AG04450 (cell line): ENCODE measurements at regions of chr4 and their contacts with region 1.

Region 1: GRCh38 chr4:16205298-16206164 is 20.7 kb downstream of the TAPT1 start:
- DNase-seq: no peak
- H3K4me3 ChIP-seq: no peak overlapping the region
- H3K27ac ChIP-seq: no peak overlapping the region
- H3K27me3 ChIP-seq: no peaks in the 10 kb centered on the region
- CTCF ChIP-seq: peak; percentile 59

Region 2: DNA sequence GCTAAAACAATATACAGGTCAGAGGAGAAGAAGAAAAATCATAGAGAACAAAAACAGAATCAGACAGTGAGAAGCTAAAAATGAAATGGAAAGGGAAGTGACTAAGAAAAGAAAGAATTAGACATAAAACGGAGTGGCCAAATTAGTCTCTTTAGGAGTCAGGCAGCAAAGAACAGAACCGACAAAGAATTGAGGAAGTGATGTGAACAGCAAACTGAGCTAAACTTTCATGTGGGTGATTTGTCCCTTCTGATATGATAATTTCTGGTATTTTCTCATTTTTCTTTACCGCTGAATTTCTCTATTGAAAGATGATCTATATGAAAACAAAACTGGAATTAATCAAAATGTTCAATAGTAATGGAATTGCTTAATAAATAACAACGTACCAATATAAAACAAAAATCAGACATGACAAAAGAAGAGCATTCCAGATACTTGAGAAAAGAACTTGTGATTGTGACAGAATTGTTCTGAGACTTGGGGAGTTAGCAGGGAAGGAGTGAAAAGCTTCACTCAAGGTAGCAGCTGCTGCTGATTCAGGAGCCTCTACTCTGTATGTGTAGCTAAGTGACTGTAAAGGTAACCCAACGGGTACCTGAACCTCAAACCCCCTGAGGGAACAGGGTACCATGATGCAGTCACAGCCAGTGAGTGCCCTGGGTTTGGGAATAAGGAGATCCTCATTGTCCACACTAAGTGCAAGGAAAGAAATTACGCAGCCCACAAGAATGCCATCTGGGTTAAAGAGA is 11.9 kb after region 1 on chr4:
- CTCF ChIA-PET with region 1: interaction called, 13 read pairs
- POLR2A ChIA-PET with region 1: no interaction called
- DNase-seq: no peak
- H3K4me3 ChIP-seq: no peak overlapping the region
- H3K27ac ChIP-seq: no peak overlapping the region
- H3K27me3 ChIP-seq: no peaks in the 10 kb centered on the region
- CTCF ChIP-seq: no peak

Region 3: DNA sequence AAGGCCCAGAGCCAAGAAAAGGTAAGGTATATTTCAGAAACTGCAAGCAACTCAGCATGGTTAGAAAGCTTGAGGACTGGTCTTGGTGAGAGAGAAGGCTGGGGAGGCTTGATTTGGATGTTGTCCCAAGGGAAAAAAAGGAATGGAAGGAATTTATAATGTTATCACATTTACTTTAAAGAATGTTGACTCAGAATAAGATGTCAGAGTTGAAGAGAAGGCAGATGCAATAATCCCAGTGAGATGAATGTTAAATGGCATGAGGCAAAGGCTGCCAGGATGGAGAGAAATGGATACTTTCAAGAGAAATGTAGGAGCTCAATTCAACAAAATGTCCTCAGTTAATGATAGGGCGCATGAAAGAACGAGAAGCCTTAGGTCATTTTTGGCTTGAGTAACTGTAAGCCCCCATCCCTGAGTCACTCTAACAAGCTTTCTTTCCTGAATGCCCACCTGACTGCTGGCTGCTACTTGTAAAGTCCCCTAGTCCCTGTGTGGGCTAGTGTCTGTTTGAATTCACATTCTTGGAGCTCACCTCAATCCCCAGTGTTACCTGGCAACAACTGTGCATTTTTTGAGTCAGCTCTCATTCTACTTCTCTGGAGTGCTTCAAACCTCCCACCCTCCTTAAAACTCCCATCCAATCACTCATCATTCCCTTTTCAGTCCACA is 123.7 kb after region 1 on chr4:
- CTCF ChIA-PET with region 1: no interaction called
- POLR2A ChIA-PET with region 1: no interaction called
- DNase-seq: no peak
- H3K4me3 ChIP-seq: no peak overlapping the region
- H3K27ac ChIP-seq: no peak overlapping the region
- H3K27me3 ChIP-seq: no peaks in the 10 kb centered on the region
- CTCF ChIP-seq: no peak

Region 4: GRCh38 chr4:17218786-17219185 is 1013.3 kb after region 1 on chr4:
- CTCF ChIA-PET with region 1: no interaction called
- POLR2A ChIA-PET with region 1: no interaction called
- DNase-seq: no peak
- H3K4me3 ChIP-seq: no peak overlapping the region
- H3K27ac ChIP-seq: no peak overlapping the region
- H3K27me3 ChIP-seq: no peaks in the 10 kb centered on the region
- CTCF ChIP-seq: no peak